ENCODE measurements at regions of chr11 and their contacts with region 1.

Region 1: DNA sequence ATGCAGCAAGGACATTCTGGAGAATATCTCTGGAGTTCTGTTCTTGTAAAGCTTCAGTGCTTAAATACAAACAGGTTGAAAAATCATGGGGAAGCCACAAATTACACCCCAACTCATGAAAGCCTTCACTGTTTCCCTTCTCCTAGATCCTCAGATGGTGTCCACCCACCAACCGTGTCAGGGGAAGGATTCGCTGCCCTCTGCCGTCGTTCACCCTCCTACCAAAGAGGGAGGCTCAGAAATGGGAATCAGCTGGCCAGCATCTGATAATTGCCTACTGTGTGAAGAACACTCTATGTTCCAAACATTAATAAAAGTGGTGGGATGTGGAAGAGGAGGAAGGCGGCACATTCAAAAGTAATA is 7.4 kb upstream of the HEPACAM start:
- DNase-seq: no peak
- H3K4me3 ChIP-seq: no peak overlapping the region
- CTCF ChIP-seq: no peak
- POLR2A ChIP-seq: no peak

Region 2: DNA sequence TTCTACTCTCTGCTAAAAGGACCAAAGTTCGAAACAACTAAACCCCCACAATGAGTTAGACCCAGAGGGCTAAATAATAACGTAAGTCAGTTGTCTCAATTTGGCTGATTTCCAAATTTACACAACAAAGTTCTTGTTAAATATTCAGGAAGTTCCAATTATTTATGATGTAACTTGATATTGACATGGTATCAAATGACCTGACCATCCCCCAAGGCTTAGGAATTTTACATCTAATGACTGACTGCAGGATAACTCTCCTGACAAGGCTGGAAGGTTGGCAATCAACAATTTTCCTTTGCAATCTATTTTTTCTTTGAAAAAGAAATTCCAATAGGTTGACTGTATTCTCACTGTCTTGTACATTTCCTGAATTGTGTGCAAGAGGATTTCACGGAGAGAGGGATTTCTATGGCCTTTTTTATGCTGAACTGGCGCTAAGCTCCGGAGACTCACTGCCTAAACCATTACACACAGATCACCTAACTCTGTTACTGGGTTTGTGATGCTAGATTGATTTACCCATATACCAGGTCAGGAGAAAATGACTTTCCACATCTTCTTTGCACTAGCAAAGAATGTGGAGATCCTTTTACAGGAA is 1129.0 kb after region 1 on chr11:
- intact Hi-C with region 1: no loop called
- DNase-seq: no peak
- H3K4me3 ChIP-seq: no peak overlapping the region
- CTCF ChIP-seq: no peak
- POLR2A ChIP-seq: no peak

Region 3: GRCh38 chr11:126534141-126534805 is 1591.0 kb after region 1 on chr11:
- intact Hi-C with region 1: loop called (anchors 5 kb)
- DNase-seq: no peak
- H3K4me3 ChIP-seq: no peak overlapping the region
- CTCF ChIP-seq: no peak
- POLR2A ChIP-seq: no peak

Measured in lower leg skin (tissue), 4 donors.